Testis (tissue), 5 donors: ENCODE measurements at regions of chr3 and their contacts with region 1.

Region 1: DNA sequence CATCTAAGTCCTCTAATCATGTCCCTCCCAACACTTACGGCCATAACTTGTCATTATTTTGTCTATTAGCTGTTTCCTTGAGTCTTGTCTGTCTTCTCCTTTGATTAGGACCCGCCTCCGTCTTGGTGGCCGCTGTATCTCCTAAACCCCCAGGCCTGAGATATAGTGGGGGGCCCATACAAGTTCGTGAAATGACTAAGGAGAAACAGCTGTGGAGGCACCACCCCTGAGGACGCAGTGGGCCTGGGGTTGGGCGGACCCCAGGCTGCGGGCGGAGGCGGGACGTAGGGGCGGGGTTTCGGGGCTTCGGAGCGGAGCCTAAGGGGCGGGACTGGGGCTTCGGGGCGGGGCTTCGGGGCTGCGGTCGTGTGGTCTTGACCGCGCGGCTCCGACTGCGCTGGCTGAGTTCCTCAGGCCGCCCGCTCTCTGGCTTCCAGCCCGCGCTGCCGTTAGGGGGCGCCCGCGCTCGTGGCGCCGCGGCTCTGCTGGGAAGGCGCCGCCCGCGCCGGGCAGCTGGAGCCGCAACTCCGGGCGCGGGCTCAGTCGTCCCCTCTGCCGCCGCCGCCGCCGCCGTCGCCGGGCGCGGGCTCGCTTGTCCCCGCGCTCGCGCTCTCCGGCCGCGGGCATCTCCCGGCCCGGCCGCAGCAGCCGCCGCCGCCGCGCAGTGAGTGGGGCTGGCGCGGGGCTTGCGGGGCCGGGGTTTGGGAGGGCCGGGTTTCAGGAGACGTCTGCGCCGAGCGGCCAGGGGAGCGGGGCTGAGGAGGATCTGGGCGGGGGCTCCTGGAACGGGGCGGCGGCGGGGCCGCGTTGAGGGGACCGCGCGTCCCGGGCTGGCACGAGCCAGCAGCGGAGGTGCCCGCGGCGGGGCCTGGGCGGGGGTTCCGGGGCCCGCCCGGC is at the start of gene KCTD6:
- DNase-seq: peak; percentile 93
- H3K4me3 ChIP-seq: peak within 1 kb of the TSS; percentile 76 to 87
- H3K27ac ChIP-seq: peak within 1 kb of the TSS; percentile 85 to 91
- H3K4me1 ChIP-seq: peaks cover 21% of the 10 kb centered on the region
- H3K27me3 ChIP-seq: no peaks in the 10 kb centered on the region
- CTCF ChIP-seq: peak; percentile 56 to 91 (median 67)
- POLR2A ChIP-seq: no peak
- total RNA-seq, gene KCTD6: 14.9 to 19.8 TPM

Region 2: GRCh38 chr3:58332575-58333188 is 159.1 kb before region 1 on chr3 and contains the start of gene PXK:
- intact Hi-C with region 1: loop called (anchors 5 kb)
- DNase-seq: peak; percentile 90
- H3K4me3 ChIP-seq: peak within 1 kb of the TSS; percentile 69 to 93
- H3K27ac ChIP-seq: peak within 1 kb of the TSS; percentile 2 to 63
- H3K4me1 ChIP-seq: peaks cover 10% of the 10 kb centered on the region
- H3K27me3 ChIP-seq: no peaks in the 10 kb centered on the region
- CTCF ChIP-seq: peak in 1 of 3 experiments; percentile 35
- POLR2A ChIP-seq: no peak
- total RNA-seq, gene PXK: 29.3 to 31.3 TPM

Region 3: GRCh38 chr3:58647381-58648141 is 155.8 kb after region 1 on chr3:
- intact Hi-C with region 1: no loop called
- DNase-seq: no peak
- H3K4me3 ChIP-seq: no peak overlapping the region
- H3K27ac ChIP-seq: no peak overlapping the region
- H3K4me1 ChIP-seq: no peaks in the 10 kb centered on the region
- H3K27me3 ChIP-seq: no peaks in the 10 kb centered on the region
- CTCF ChIP-seq: no peak
- POLR2A ChIP-seq: no peak

Region 4: DNA sequence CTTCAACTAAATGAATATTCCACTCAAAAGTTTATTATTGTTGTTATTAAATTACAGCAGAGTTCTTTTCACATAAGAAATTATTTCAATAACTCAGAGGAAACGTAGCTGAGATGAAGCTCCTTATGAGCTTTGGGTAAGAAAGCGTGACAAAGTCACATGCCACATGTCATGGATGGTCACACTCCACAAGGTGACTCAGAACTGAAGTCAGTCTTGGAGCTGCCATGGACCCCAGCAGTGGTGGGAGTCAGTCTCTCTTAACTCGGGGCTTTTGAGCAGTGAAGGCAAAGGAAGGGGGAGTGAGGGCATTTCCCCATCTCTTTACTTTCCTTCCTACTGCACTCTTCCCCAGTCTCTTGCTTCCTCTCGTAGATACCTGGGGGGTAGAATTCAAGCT is 262.3 kb after region 1 on chr3:
- intact Hi-C with region 1: no loop called
- DNase-seq: no peak
- H3K4me3 ChIP-seq: no peak overlapping the region
- H3K27ac ChIP-seq: no peak overlapping the region
- H3K4me1 ChIP-seq: no peaks in the 10 kb centered on the region
- H3K27me3 ChIP-seq: no peaks in the 10 kb centered on the region
- CTCF ChIP-seq: no peak
- POLR2A ChIP-seq: no peak